Prostate gland (tissue), 2 donors: ENCODE measurements at regions of chr7 and their contacts with region 1.

Region 1: DNA sequence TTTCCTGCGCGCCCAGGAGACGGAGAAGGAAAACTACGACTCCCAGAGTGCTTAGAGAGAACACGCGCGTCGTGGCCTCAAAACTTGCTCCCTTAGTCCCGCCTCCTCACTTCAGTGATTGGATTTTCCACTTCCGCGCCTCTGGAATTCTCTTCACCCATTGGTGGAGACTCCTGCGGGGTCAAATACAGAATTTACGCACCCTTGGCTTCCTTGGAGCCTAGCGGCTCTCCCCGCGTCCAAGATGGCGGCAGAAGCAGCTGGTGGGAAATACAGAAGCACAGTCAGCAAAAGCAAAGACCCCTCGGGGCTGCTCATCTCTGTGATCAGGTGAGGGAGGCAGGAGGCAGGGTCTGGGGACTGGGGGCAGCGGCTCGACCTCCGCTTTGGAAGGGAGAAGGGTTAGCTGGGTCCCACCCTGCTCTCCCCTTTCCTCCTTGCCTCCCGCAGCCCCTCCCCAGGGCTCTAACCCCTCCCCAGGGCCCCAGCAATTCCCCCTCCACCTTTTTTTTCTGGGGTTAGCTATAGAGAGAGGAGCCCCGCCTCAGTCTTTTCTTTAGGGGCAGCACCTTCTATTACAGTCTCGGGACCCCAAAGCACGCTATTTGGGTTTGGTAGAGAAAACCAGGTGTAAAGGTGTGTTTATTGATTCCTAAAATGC is at the start of gene EXOC4:
- DNase-seq: peak; percentile 96
- H3K4me3 ChIP-seq: peak within 1 kb of the TSS; percentile 67 to 77
- H3K27ac ChIP-seq: peak within 1 kb of the TSS; percentile 77 to 82
- H3K4me1 ChIP-seq: no peaks in the 10 kb centered on the region
- H3K27me3 ChIP-seq: no peaks in the 10 kb centered on the region
- CTCF ChIP-seq: no peak
- POLR2A ChIP-seq: peak; percentile 60
- total RNA-seq, gene EXOC4: 48.9 to 102 TPM

Region 2: DNA sequence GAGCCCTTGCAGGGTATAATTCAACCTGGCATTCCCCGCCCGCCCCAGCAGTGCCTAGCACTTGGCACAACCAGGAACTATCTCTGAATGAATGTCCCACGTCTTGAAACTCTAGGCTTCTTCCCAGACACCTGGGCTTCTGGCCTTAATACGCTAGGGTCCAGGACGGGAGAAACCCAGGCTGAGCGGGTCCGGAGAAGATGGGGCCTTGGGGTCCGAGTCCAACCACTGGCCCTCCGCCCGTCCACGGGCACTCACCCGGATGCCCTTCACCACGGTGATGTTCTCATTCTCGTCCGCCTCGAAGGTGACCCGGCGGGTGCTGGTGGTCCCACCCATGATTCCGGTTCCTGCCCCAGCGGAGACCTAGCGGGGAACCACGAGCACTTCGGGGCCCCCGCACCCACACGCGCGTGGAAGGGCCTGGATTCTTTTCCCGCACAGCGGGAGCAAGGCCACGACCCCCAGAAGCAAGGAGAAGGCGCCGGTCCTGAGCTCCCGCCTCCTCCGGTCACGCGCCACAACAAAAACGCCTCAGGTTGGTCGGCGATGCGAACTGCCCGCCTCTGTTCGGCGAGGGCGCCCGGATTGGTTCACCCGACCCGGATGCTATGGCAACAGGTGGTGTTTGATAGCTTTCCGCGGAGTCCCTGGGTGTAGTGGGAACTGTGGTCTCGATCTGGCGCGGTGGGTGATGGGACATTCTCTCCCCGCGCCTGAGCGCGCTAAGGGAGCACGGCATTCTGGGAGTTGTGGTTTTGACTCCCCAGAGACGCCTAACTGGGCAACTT is 171.2 kb before region 1 on chr7 and contains the start of gene CHCHD3:
- intact Hi-C with region 1: loop called (anchors 5 kb)
- DNase-seq: peak; percentile 98
- H3K4me3 ChIP-seq: peak within 1 kb of the TSS; percentile 83 to 87
- H3K27ac ChIP-seq: peak within 1 kb of the TSS; percentile 65 to 79
- H3K4me1 ChIP-seq: no peaks in the 10 kb centered on the region
- H3K27me3 ChIP-seq: no peaks in the 10 kb centered on the region
- CTCF ChIP-seq: no peak
- POLR2A ChIP-seq: no peak
- total RNA-seq, gene CHCHD3: 33.2 to 40.9 TPM